HEK293 (cell line): ENCODE measurements at regions of chr13 and their contacts with region 1.

Region 1: GRCh38 chr13:108895220-108895704 is 265.9 kb downstream of the MYO16 start:
- H3K4me3 ChIP-seq: no peak overlapping the region
- H3K27ac ChIP-seq: no peak overlapping the region
- H3K4me1 ChIP-seq: no peaks in the 10 kb centered on the region
- CTCF ChIP-seq: no peak

Region 2: DNA sequence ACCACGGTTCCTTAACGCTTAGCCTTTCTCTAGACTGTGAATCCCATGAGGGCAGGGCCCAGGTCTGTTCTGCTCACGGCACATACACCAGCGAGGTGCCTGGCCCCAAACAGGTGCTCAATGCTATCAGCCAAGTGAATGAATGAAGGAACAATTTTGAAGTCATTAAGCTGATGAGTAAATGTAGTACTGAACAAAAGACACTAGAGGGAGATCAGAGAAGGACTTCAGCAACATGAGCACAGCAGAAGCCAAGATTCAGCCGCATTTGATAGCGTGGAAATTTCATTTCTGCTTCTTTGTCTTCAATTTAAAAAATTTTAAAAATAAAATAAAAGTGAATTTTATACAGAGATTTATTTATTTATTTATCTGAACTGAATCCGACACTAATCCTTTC is 285.9 kb before region 1 on chr13:
- CTCF ChIA-PET with region 1: interaction called, 15 read pairs
- POLR2A ChIA-PET with region 1: no interaction called
- H3K4me3 ChIP-seq: no peak overlapping the region
- H3K27ac ChIP-seq: no peak overlapping the region
- H3K4me1 ChIP-seq: no peaks in the 10 kb centered on the region
- CTCF ChIP-seq: no peak